Endothelial cell of umbilical vein (primary cell): ENCODE measurements at regions of chr17 and their contacts with region 1.

Region 1: DNA sequence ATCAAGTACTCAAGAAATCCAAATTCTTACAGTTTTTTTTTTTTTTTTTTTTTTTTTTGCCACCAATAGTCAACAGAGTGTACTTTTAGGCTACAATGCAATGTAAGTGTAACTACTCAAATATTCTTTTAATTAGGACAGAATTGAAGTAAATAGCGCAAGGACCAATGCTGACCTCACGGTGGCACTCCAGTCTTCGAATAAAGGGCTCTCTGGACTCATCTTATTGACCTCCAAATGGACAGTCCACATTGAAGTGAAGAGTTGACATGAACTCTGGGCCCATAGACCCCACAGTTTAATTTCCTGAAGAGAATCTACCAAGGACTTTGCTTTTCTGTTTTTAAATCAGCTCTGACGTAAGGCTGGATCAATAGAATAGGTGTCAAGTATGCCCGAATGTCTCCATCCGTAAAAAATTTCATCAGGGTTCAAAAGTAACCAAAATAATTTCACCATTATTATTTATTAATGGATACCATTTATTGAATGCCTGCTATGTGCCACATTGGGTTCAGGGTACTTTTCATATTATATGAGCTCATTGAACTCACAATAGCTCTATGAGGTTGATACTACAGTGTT is 7.3 kb upstream of the DDX52 start:
- DNase-seq: peak; percentile 62
- H3K4me3 ChIP-seq: no peak overlapping the region
- H3K27ac ChIP-seq: peak overlapping the region; percentile 80
- H3K4me1 ChIP-seq: peaks cover 30% of the 10 kb centered on the region
- H3K27me3 ChIP-seq: no peaks in the 10 kb centered on the region
- CTCF ChIP-seq: peak; percentile 45 to 49
- POLR2A ChIP-seq: no peak

Region 2: DNA sequence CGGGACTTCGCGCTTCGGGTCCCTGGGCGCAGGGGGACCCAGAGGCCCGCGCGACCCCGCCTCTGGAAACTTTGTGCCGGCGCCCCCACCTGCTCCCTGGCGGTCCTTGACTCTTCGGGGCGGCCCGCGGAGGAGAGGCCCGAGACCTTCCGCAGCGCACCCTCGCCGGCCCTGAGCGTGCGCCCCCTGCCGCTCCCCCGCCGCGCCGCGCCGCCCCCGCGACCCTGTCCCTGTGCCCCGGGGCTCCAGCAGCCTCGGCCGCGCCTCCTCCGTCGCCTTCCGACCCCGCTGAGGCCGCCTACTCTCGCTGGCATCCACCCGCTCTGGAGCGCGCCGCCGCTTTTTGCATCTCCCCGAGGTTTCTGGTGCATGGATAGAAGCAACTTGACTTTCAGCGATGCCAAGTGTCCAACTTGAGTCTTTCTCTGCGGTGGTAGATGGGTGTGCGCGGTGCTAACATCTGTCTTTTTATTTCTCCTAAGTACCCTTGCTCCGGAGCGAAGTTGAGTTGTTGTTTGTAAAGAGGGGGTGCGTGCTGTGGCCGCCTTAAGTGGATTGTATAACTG is 160.4 kb before region 1 on chr17:
- CTCF ChIA-PET with region 1: no interaction called
- POLR2A ChIA-PET with region 1: no interaction called
- dilution Hi-C with region 1: no loop called
- intact Hi-C with region 1: no loop called
- DNase-seq: peak; percentile 69
- H3K4me3 ChIP-seq: peak overlapping the region; percentile 48 to 82 (median 65)
- H3K27ac ChIP-seq: peak overlapping the region; percentile 67
- H3K4me1 ChIP-seq: peaks cover 34% of the 10 kb centered on the region
- H3K27me3 ChIP-seq: no peaks in the 10 kb centered on the region
- CTCF ChIP-seq: peak; percentile 17 to 28
- POLR2A ChIP-seq: no peak

Region 3: DNA sequence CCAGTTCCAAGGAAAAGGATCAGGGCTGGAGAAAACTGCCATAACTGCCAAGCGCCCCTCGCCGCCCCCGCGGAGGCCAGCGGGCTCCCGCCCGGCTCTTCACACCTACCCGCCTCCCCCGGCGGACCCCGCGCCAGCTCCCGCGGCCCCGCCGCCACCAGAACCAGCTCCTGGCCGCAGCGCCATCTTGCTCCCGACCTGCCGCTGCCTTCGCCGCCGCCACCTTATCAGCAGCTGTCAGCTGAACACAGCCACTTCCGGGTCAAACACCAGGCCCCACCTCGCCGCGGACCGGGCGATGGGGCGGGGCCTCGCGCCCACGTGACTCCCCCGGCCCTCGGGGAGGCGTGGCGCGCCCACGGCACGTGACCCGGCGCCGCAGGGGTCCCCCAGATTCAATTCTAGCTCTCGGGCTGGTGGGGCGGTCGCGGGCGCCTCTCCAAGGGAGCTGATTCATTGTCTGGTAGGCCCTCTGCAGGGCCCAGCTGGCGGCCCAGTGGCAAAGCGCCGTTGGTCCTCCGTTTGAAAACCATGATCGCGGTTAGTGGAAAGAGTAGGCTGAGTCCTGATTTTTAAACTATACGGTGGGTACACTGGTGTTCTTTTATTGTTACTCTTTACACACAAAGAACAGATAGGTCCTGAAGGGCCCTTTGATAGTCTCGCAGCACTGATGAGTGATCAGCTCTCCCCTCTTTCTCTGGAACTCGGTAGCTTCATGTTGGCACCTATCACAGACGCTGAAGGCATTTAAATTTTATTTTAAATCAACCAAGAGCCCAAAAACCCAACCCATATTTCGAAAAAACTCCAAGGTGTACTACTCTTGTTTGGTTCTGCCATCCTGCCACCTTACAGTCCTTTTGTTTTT is 41.1 kb before region 1 on chr17 and contains the start of gene SYNRG:
- CTCF ChIA-PET with region 1: interaction called, 6 read pairs
- POLR2A ChIA-PET with region 1: interaction called, 3 read pairs
- dilution Hi-C with region 1: no loop called
- intact Hi-C with region 1: loop called (anchors 2 kb)
- DNase-seq: peak; percentile 98
- H3K4me3 ChIP-seq: peak within 1 kb of the TSS; percentile 79 to 97 (median 97)
- H3K27ac ChIP-seq: peak within 1 kb of the TSS; percentile 82
- H3K4me1 ChIP-seq: peaks cover 30% of the 10 kb centered on the region
- H3K27me3 ChIP-seq: no peaks in the 10 kb centered on the region
- CTCF ChIP-seq: peak; percentile 12 to 47
- POLR2A ChIP-seq: peak; percentile 92
- total RNA-seq, gene SYNRG: 42.2 and 43.3 TPM in 2 replicates

Region 4: GRCh38 chr17:37701496-37701898 is 51.0 kb after region 1 on chr17:
- CTCF ChIA-PET with region 1: interaction called, 4 read pairs
- POLR2A ChIA-PET with region 1: no interaction called
- dilution Hi-C with region 1: no loop called
- intact Hi-C with region 1: loop called (anchors 1 kb)
- DNase-seq: peak; percentile 27
- H3K4me3 ChIP-seq: no peak overlapping the region
- H3K27ac ChIP-seq: no peak overlapping the region
- H3K4me1 ChIP-seq: no peaks in the 10 kb centered on the region
- H3K27me3 ChIP-seq: peaks cover 23 to 29% of the 10 kb centered on the region in 2 experiments
- CTCF ChIP-seq: peak; percentile 58 to 68
- POLR2A ChIP-seq: no peak

Region 5: DNA sequence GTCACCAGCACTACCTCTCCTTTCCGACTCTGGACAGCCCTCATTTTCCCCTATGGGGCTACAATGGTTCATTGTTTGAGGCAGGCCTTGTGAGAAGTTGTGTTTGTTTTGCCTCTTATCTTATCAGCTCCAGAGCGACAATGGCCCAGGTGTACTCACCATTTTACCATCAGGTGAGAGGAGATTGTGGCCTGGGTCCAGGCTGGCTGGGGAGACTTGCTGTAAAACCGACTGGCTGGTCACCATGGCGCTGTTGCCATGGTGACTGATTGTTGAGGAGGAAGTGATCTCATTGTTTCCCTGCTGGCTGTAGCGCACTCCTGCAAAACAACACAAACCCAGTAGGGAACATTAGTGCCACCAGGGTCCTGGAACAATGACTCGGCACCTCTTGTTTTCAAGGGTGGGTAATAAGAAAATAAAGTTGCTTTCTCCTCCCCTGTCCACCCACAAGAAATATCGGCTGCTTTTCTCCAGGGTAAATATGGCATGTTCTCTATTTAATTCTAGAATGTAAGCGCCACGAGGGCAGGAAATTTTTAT is 59.9 kb after region 1 on chr17:
- CTCF ChIA-PET with region 1: interaction called, 3 read pairs
- POLR2A ChIA-PET with region 1: no interaction called
- dilution Hi-C with region 1: no loop called
- intact Hi-C with region 1: loop called (anchors 2 kb)
- DNase-seq: peak; percentile 86
- H3K4me3 ChIP-seq: no peak overlapping the region
- H3K27ac ChIP-seq: peak overlapping the region; percentile 12
- H3K4me1 ChIP-seq: peaks cover 3% of the 10 kb centered on the region
- H3K27me3 ChIP-seq: peaks cover 18% of the 10 kb centered on the region in 2 experiments
- CTCF ChIP-seq: no peak
- POLR2A ChIP-seq: no peak

Region 6: DNA sequence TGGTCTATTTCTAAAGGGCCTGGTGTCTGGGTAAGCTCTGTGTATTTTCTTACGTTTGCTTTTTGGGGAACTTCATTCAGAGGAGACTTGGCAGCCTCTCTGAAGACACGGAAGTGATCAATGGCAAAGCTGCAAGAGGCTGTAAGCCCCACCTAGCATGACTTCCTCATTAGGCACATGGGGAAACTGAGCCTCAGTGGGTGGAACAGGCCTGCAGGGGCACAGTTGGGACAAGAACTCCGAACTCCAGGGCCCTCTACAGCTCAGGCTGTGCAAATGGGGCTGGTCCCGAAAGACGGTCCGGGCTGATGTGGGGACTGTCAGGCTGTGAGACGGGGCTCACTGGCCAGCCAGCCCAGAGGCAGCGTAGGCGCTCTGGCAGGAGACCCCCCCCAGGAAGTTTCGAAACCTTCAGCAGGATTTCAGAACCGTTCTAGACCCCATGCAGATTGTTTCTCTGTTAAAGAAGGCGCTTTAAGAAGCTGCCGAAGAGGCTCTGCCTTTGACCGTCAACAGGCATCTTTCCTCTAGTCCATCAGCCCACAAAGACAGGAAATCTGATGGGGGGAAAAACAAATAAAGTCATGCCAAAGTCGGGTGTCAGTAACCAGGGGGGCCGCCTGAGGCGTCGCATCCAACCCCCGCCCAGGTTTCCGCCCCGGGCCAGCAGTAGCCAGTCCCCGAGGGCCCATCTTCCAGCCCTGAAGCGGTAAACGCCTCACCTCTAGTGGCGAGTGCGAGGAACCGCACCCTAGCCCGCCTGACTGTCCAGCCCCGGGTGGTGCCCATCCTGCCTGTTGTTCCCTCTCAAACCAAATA is 193.9 kb after region 1 on chr17:
- CTCF ChIA-PET with region 1: interaction called, 11 read pairs
- POLR2A ChIA-PET with region 1: no interaction called
- dilution Hi-C with region 1: no loop called
- intact Hi-C with region 1: loop called (anchors 10 kb)
- DNase-seq: peak; percentile 64
- H3K4me3 ChIP-seq: no peak overlapping the region
- H3K27ac ChIP-seq: no peak overlapping the region
- H3K4me1 ChIP-seq: peaks cover 4% of the 10 kb centered on the region
- H3K27me3 ChIP-seq: no peaks in the 10 kb centered on the region
- CTCF ChIP-seq: peak; percentile 74 to 95
- POLR2A ChIP-seq: no peak